ENCODE measurements at regions of chr16 and their contacts with region 1.

Region 1: GRCh38 chr16:88437373-88437964 is 15.6 kb upstream of the ZFPM1 start:
- DNase-seq: peak; percentile 44 to 98
- H3K4me3 ChIP-seq: no peak overlapping the region
- H3K27ac ChIP-seq: no peak overlapping the region
- H3K4me1 ChIP-seq: peaks cover 0 to 3% (median 0%) of the 10 kb centered on the region in 4 experiments; a peak in 2 of 7 replicates
- H3K27me3 ChIP-seq: no peaks in the 10 kb centered on the region; a peak in 3 of 7 replicates
- CTCF ChIP-seq: peak; percentile 93 to 98 (median 93)
- EP300 ChIP-seq: no peak
- POLR2A ChIP-seq: no peak
- RAD21 ChIP-seq: peak; percentile 84 to 87

Region 2: DNA sequence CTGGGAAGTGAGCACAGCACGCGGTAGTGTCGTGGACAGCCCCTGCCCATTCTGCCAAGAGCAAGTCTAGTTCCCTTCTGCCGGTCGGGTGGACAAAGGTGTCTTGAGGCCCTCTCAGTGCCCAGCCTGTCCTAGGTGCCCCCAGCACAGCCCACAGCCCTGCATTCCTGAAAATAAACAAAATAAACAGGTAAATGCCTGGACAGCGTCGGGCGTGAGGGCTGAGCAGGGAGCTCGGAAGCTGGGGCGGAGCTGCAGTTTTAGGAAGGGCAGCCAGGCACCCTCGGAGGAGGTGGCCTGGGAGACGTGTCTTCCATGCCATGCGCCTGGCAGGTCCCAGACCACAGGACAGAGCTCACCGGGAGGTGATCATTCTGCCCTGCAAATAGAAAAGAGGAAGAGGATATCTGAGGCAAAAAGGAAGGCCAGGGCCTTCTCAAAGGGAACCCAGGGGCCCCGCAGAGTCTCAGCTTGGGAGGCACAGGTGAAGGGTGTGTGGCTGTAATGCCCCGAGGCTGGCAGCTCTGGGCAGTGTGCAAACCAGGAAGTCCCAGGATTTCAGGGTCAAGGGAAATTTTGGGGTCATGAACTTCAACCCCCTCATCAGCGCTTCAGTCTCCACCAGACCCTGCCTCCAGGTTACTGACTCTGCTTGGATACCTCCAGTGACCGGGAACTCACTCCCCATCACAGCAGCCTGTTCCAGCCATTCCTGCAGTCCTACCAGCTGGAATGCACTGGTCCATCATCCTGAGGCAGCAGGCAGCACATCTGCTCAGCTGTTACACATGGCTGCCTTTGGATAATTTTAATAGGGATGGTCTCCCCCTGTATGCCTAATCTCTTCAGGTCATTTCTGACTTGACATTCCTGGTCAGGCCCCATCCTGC is 53.0 kb before region 1 on chr16:
- CTCF ChIA-PET with region 1: no interaction called
- POLR2A ChIA-PET with region 1: no interaction called
- DNase-seq: no peak
- H3K4me3 ChIP-seq: peak overlapping the region in 2 of 4 experiments; percentile 22 to 57; a peak in 4 of 8 replicates
- H3K27ac ChIP-seq: no peak overlapping the region
- H3K4me1 ChIP-seq: peaks cover 6 to 27% (median 20%) of the 10 kb centered on the region in 4 experiments
- H3K27me3 ChIP-seq: peaks cover 21 to 36% (median 34%) of the 10 kb centered on the region in 4 experiments
- CTCF ChIP-seq: no peak
- EP300 ChIP-seq: no peak
- POLR2A ChIP-seq: no peak
- RAD21 ChIP-seq: no peak

Region 3: DNA sequence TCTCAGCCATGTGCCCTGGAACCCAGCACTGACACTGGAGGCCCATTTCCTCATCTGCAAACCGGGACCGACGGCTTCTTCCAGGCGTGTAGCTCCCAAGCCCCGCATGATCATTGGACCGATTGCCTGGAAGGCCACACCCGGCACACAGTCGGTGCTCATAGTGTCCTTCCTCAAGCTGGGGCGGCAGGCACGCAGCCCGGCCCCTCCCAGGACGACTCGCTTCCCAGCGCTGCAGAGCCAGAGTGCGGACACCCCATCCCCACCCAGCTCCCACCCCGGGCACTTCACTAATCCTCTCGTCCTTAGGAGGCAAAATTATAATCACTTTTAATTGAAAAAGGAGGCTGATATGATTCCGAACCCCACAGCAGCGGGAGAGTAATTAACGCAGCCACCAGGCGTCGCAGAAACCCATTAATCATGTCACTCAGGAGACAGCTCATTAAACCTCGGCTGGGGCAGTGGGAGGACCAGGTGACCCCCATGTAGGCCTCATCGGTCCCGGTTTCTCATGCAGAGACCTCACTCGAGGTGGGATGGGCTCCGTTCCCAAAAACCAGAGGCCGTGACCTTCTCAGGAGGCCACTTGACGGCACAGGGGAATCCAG is 21.7 kb before region 1 on chr16:
- CTCF ChIA-PET with region 1: interaction called, 12 read pairs
- POLR2A ChIA-PET with region 1: no interaction called
- DNase-seq: no peak
- H3K4me3 ChIP-seq: no peak overlapping the region
- H3K27ac ChIP-seq: no peak overlapping the region
- H3K4me1 ChIP-seq: no peaks in the 10 kb centered on the region; a peak in 1 of 7 replicates
- H3K27me3 ChIP-seq: no peaks in the 10 kb centered on the region
- CTCF ChIP-seq: no peak
- EP300 ChIP-seq: no peak
- POLR2A ChIP-seq: no peak
- RAD21 ChIP-seq: no peak

Region 4: DNA sequence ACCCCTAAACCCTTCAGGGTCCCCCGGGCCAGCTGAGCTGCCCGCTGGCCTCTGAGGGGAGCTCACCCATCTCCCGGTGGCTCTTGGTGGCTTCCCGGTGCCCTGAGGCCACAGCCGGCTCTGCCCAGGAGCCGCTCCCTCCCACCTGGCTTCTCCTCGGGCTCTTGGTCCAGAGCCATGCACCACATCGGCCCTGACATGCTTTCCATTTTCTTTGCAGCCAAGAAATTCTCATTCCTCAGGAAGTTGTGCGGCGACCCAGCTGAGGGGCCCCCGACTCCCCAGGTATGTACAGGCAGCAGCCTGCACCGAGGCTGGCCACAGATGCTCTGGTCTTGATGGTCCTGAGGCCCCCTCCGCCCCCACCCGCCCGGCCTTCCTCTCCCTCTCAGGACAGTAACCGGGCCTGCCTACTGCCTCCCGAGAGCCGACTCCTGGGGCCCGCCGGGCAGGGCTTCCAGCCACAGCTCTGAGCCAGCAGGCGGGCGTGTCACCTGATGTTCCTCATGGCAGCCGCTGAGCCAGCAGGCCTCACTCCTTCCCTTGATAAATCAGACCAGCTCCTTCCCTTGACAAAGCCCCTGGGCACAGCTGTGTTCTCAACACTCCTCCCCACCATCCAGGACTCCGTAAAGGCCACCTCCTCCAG is 12.8 kb before region 1 on chr16:
- CTCF ChIA-PET with region 1: interaction called, 24 read pairs
- POLR2A ChIA-PET with region 1: no interaction called
- DNase-seq: no peak
- H3K4me3 ChIP-seq: no peak overlapping the region
- H3K27ac ChIP-seq: no peak overlapping the region
- H3K4me1 ChIP-seq: peaks cover 0 to under 1% (median under 1%) of the 10 kb centered on the region in 4 experiments; a peak in 1 of 7 replicates
- H3K27me3 ChIP-seq: peaks cover 0 to 4% (median 1%) of the 10 kb centered on the region in 4 experiments; a peak in 4 of 7 replicates
- CTCF ChIP-seq: no peak
- EP300 ChIP-seq: no peak
- POLR2A ChIP-seq: no peak
- RAD21 ChIP-seq: no peak

Region 5: GRCh38 chr16:88448461-88449266 is 11.2 kb after region 1 on chr16:
- CTCF ChIA-PET with region 1: interaction called, 10 read pairs
- POLR2A ChIA-PET with region 1: interaction called, 4 read pairs
- DNase-seq: no peak
- H3K4me3 ChIP-seq: no peak overlapping the region
- H3K27ac ChIP-seq: no peak overlapping the region
- H3K4me1 ChIP-seq: peaks cover 0 to 8% (median 0%) of the 10 kb centered on the region in 4 experiments; a peak in 3 of 7 replicates
- H3K27me3 ChIP-seq: peaks cover 9 to 24% (median 18%) of the 10 kb centered on the region in 4 experiments
- CTCF ChIP-seq: no peak
- EP300 ChIP-seq: no peak
- POLR2A ChIP-seq: no peak
- RAD21 ChIP-seq: no peak

Region 6: DNA sequence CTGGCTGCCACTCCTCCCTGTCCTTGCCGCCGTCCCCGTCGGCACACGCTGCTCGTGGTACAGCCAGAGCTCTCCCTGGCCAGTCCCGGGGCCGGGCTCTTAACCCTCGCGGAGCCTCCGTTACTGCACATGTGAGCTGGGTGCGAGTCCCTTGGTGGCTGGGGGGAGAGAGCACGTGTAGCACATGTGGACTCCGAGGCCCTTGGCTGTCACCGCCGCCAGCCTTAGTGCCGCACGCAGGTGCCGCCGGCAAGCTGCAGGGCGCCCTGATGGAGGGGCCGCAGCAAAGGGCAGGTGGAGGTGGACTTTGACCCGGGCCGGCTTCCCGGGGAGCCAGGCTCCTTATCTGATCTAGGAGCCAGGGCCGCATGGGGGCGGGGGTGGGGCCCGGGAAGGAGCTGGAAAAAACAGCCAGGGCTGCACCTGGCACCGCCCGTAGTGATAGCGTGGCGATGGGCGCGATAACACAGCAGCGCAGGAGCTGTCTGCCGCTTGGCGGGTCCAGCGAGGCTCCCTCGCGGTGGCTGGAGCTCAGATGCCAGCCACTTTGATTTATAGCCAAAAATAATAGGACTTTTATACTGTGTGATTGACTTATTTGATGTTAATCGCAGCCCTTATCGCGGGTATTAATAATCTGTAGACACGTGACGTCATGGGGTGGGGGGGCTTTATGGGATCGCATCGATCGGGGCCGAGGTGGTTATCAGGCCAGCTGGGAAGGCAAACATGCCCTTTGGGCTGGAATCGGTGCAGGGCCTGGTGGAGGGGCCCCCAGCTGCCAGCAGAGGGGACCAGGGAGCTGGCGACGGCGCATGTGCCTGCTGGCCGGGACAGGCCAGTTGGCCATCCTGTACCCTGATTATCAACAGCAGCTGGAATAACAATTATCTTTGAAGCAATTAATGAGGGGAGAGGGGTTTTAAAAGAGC is 50.7 kb after region 1 on chr16:
- CTCF ChIA-PET with region 1: interaction called, 22 read pairs
- POLR2A ChIA-PET with region 1: interaction called, 3 read pairs
- DNase-seq: no peak
- H3K4me3 ChIP-seq: no peak overlapping the region
- H3K27ac ChIP-seq: no peak overlapping the region
- H3K4me1 ChIP-seq: peaks cover 0 to 2% (median 0%) of the 10 kb centered on the region in 4 experiments; a peak in 1 of 7 replicates
- H3K27me3 ChIP-seq: no peaks in the 10 kb centered on the region
- CTCF ChIP-seq: peak; percentile 10 to 36 (median 31); a peak in 3 of 4 replicates
- EP300 ChIP-seq: no peak
- POLR2A ChIP-seq: no peak
- RAD21 ChIP-seq: peak in 1 of 2 experiments; percentile 15; a peak in 2 of 4 replicates

Region 7: GRCh38 chr16:88561485-88562369 is 124.3 kb after region 1 on chr16:
- CTCF ChIA-PET with region 1: interaction called, 35 read pairs
- POLR2A ChIA-PET with region 1: no interaction called
- DNase-seq: peak in 1 of 2 experiments; percentile 74
- H3K4me3 ChIP-seq: no peak overlapping the region
- H3K27ac ChIP-seq: no peak overlapping the region
- H3K4me1 ChIP-seq: no peaks in the 10 kb centered on the region
- H3K27me3 ChIP-seq: peaks cover 0 to 6% (median 0%) of the 10 kb centered on the region in 4 experiments; a peak in 3 of 7 replicates
- CTCF ChIP-seq: peak; percentile 67 to 81 (median 77)
- EP300 ChIP-seq: no peak
- POLR2A ChIP-seq: no peak
- RAD21 ChIP-seq: peak; percentile 76 to 80

Measured in H1 (cell line).